ENCODE measurements at regions of chr9 and their contacts with region 1.

Region 1: DNA sequence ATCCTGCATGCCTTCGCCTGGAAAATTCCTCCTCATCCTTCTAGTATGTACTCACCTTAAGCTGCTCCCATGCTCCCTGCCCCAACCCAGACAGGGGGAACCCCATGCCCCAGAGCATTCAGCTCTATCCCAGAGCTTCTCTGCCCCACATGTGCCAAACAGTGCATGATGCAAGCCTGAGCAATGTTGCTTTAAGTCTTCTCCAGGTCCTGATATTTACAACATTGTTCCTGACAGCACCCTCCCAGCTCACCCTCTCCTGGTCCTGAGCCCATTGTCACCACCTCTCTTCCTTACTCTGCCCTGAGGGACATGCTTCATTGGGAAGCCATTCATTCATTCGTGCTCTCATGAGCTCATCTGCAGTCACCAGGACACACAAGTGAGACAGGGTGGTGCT is 23.4 kb upstream of the BARX1 start:
- DNase-seq: no peak
- H3K4me3 ChIP-seq: no peak overlapping the region
- H3K27ac ChIP-seq: no peak overlapping the region
- H3K4me1 ChIP-seq: no peaks in the 10 kb centered on the region
- H3K27me3 ChIP-seq: no peaks in the 10 kb centered on the region
- CTCF ChIP-seq: no peak
- EP300 ChIP-seq: no peak
- POLR2A ChIP-seq: no peak

Region 2: GRCh38 chr9:93413530-93413929 is 565.0 kb before region 1 on chr9:
- intact Hi-C with region 1: no loop called
- DNase-seq: no peak
- H3K4me3 ChIP-seq: no peak overlapping the region
- H3K27ac ChIP-seq: no peak overlapping the region
- H3K4me1 ChIP-seq: no peaks in the 10 kb centered on the region
- H3K27me3 ChIP-seq: no peaks in the 10 kb centered on the region
- CTCF ChIP-seq: no peak
- EP300 ChIP-seq: no peak
- POLR2A ChIP-seq: no peak

Region 3: DNA sequence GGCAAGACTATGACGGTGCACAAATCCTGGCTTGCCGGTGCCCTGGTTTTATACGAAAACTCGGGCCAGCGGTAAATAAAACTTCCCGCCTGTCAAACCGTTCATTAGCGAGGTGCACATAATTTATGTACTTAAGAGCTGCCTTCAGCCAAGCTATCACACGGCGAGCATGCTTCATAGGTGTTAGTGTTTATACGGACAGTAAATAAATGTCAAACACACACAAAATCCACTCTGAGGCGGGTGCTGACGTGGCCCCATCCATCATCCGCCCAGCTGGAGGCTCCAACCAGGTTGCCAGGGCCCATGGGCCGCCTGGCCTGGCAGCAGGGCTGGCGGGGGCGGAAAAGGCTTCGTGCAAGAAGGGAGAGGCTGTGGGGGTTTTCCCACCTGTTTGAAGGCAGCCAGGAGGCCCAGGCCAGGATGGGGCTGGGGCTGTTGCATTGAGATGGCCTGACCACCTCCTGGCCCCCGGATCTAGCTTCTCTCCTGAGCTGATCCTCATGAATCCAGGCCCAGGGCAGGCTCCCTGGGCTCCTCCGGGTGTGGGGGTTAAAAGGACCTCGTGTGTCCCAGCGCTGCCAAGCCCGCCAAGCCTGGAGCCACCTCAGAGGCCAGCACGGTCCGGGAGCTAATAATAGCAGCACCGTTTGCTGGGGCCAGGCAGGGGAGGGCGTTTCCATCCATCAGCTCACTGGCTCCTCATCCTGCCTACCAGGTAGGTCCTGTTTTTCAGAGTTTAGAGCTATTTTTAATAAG is 66.6 kb before region 1 on chr9:
- intact Hi-C with region 1: loop called in 1 of 4 experiments (anchors 10 kb)
- DNase-seq: no peak
- H3K4me3 ChIP-seq: no peak overlapping the region
- H3K27ac ChIP-seq: no peak overlapping the region
- H3K4me1 ChIP-seq: no peaks in the 10 kb centered on the region
- H3K27me3 ChIP-seq: no peaks in the 10 kb centered on the region
- CTCF ChIP-seq: no peak
- EP300 ChIP-seq: no peak
- POLR2A ChIP-seq: no peak

Measured in ovary (tissue), 10 donors.